ENCODE measurements at regions of chr22 and their contacts with region 1.

Region 1: GRCh38 chr22:32528984-32529982 is 54.7 kb downstream of the FBXO7 start:
- DNase-seq: peak; percentile 85 to 92
- ATAC-seq: peak; percentile 66 to 77 (median 70)
- H3K4me3 ChIP-seq: peak overlapping the region in 1 of 10 donors; percentile 13
- H3K27ac ChIP-seq: peak overlapping the region; percentile 76 to 93 (median 82)
- H3K4me1 ChIP-seq: peaks cover 15 to 59% (median 49%) of the 10 kb centered on the region in 9 donors
- H3K27me3 ChIP-seq: no peaks in the 10 kb centered on the region
- CTCF ChIP-seq: peak; percentile 83 to 95 (median 90)

Region 2: DNA sequence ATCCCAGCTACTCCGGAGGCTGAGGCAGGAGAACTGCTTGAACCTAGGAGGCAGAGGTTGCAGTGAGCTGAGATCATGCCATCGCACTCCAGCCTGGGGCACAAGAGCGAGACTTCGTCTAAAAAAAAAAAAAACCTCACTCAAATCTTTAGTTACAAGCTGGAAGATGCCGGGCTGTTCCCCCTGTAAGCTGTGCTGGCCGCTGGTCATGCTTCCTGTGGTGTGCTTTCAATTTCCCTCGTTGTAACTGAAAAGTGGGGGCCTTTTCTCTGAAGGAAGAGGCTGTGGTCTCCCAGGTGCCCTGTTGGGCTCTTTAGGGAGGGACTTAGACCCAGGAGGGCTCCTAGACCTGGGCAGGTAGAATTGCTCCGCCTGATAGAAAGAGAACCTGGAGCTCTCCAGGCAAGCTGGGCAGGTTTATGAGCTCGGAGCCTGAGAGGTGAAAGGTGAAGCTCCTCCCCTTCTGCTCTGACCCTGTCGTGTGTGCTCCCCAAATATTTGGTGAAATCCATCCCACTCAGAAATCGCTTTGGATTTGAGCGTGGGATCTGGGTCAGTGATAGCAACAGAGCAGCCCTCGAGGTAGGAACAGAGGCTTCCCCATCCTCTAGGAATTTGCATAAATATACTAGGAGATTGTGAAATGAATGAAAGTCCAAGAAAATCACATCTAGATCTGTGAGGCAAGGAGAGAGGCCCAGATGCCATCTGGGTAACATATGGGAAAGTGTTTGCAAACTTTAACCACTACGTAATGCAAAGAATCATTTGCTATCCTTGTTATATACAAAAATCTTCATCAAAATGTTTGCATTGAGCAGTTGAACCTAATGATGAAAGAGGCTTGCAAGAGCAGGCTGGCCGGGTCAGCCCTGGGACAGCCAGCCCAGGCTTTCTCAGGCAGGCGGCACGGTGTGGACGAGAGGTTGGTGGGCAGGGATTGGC is 99.6 kb after region 1 on chr22:
- intact Hi-C with region 1: loop called in 6 of 10 experiments (anchors 5 to 10 kb)
- DNase-seq: no peak
- ATAC-seq: peak in 1 of 8 donors; percentile 21
- H3K4me3 ChIP-seq: no peak overlapping the region
- H3K27ac ChIP-seq: peak overlapping the region; percentile 57 to 93 (median 86)
- H3K4me1 ChIP-seq: peaks cover 17 to 74% (median 47%) of the 10 kb centered on the region in 9 donors
- H3K27me3 ChIP-seq: no peaks in the 10 kb centered on the region
- CTCF ChIP-seq: no peak

Region 3: DNA sequence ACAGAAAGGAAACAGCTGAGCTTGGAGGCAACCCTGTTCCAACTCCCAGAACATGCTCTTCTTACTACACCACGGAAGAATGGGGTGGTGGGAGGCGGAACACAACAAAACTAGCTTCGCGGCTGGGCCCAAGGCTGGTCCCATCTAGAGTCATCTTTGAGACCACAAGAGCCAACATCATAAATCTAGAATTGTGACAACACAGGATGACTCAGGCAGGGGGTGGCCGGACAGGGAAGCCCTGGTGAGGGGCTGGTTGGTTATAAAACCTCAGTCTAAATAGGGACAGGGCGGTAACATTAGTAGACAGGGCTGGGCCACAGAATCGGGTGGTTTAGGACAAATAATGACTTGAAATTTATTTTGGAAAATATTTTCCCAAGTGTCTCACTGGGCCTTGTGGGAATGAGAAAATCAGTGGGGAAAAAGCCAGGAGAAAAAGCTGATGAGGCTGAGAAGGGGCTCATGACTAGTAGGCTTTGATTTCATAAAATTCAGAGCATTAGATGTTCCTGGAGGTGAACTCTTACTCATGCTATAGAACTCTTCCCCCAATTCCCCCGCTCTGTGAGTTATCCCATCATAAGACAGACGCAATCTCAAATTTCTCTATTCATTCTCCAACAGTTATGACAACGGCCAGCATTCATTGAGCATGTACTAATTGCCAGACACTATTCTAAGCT is 120.4 kb after region 1 on chr22:
- intact Hi-C with region 1: loop called in 5 of 10 experiments (anchors 5 to 10 kb)
- DNase-seq: no peak
- ATAC-seq: peak in 6 of 8 donors; percentile 23 to 66 (median 58)
- H3K4me3 ChIP-seq: no peak overlapping the region
- H3K27ac ChIP-seq: peak overlapping the region in 4 of 10 donors; percentile 16 to 56 (median 32)
- H3K4me1 ChIP-seq: peaks cover 0 to 16% (median 6%) of the 10 kb centered on the region in 9 donors
- H3K27me3 ChIP-seq: no peaks in the 10 kb centered on the region
- CTCF ChIP-seq: no peak

Region 4: DNA sequence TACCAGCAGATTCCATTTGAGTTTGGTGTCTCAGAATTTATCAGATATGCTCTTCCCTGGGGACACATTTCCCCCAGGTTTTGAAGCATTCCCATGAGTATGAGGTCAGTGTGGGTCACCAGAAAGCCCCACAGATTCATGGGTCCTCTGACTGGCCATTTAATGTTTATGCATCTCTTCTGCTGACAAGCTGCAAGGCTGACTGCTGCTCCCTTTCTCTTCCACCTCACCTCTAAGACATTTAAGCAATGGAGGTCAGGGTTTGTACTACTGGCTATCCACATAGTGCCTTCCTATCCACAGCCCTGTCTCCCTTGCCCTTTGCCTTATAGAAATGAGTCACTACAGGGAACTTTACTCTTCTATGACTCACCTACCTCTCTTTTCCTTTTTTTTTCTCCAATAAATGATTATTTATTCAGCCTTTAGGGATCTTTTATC is 166.2 kb after region 1 on chr22:
- intact Hi-C with region 1: loop called in 1 of 10 experiments (anchors 5 kb)
- DNase-seq: no peak
- ATAC-seq: no peak
- H3K4me3 ChIP-seq: no peak overlapping the region
- H3K27ac ChIP-seq: no peak overlapping the region
- H3K4me1 ChIP-seq: peaks cover 0 to 19% (median 13%) of the 10 kb centered on the region in 9 donors
- H3K27me3 ChIP-seq: peaks cover 0 to 2% (median 0%) of the 10 kb centered on the region in 7 donors
- CTCF ChIP-seq: no peak

Region 5: GRCh38 chr22:32926600-32926999 is 397.3 kb after region 1 on chr22:
- intact Hi-C with region 1: loop called in 1 of 10 experiments (anchors 10 kb)
- DNase-seq: no peak
- ATAC-seq: peak in 1 of 8 donors; percentile 52
- H3K4me3 ChIP-seq: no peak overlapping the region
- H3K27ac ChIP-seq: no peak overlapping the region
- H3K4me1 ChIP-seq: no peaks in the 10 kb centered on the region
- H3K27me3 ChIP-seq: no peaks in the 10 kb centered on the region
- CTCF ChIP-seq: peak; percentile 35 to 80 (median 69)

Region 6: DNA sequence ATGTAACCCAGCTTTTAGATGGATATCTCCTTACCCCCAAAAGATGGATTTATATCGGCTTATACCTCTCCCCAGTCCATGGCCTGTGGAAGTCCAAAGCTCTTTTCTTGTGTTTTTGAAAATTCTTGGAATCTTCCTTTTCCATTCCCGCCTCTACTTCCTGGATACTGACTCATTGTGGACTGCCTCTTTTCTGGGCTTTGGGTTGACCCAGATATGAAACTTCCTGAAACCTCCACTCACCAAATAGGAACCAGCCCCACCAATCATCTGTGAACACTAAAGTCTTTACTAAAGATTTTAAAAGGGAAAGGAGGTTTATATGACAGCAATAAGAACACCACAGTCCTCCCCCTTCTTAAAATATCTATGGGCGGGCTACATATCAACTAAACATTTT is 692.3 kb after region 1 on chr22:
- intact Hi-C with region 1: no loop called
- DNase-seq: peak in 1 of 2 donors; percentile 5
- ATAC-seq: peak in 7 of 8 donors; percentile 47 to 80 (median 61)
- H3K4me3 ChIP-seq: peak overlapping the region in 6 of 10 donors; percentile 27 to 44 (median 36)
- H3K27ac ChIP-seq: peak overlapping the region in 5 of 10 donors; percentile 15 to 46 (median 20)
- H3K4me1 ChIP-seq: peaks cover 0 to 3% (median 0%) of the 10 kb centered on the region in 9 donors
- H3K27me3 ChIP-seq: no peaks in the 10 kb centered on the region
- CTCF ChIP-seq: no peak